ENCODE measurements at regions of chr3 and their contacts with region 1.

Region 1: DNA sequence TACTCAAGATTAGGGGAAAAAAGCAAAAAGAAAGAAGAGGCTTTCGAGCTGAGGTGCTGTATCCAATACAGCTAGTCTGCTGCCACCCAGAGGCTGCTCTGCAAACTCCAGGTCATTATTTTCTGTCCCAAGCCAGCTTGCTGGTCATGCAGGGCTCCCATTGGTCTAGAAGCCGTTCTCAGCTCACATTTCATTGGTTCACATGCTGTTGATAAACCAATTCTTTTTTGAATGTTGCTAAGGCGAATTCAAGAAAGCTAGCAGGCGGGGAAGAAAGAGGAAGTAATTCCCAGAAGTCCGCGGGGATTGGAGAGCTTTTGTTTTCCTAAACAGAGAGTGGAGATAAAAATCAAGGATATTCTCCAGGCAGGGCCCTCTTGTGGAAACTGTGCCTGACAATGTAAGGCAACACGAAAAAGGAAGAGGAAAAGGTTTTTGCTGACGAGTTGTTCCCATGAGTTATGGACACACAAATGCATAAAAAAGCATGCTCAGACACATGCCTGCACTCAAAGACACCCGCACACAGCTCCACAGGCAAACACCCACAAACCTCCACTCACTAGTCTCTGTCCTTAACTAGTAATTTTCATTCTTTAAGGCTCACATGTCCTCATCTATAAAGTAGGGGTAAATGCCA is 33.4 kb downstream of the FSTL1 start:
- DNase-seq: peak; percentile 94
- H3K4me3 ChIP-seq: no peak overlapping the region
- H3K27me3 ChIP-seq: no peaks in the 10 kb centered on the region
- CTCF ChIP-seq: peak; percentile 82

Region 2: DNA sequence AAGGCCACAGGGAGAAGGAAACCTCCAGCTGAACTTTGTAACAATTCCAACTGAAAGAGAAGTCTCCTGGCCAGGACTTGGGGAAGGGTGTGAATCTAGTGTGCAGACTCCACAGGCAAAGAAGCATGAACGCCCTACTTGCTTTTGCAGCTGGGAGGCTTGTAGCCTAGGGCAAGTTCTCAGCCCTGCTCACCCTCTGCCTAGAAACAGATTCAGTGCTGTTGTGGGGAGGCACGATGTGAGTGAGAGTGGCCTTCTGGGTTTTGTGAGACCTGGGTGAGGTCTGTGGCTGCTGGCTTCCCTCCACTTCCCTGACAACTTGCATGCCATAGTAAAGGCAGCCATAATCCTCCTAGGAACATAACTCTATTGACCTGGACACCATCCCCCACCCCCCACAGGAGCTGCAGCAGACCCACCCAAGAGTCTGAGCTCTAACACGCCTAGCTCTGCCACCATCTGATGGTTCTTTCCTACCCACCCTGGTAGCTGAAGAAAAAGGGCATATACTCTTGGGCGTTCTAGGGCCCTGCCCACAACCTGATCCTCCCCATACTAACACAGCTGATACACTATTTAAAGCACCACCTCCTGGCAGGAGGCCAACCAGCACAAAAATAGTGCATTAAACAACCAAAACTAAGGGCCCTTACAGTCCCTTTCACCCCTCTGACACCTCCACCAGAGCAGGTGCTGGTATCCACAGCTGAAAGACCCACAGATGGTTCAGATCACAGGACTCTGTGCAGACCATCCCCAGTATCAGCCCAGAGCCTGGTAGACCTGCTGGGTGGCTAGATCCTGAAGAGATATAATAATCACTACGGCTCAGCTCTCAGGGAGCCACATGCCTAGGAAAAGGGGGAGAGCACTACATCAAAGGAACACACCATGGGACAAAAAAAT is 1809.2 kb before region 1 on chr3:
- CTCF ChIA-PET with region 1: no interaction called
- POLR2A ChIA-PET with region 1: no interaction called
- DNase-seq: no peak
- H3K4me3 ChIP-seq: no peak overlapping the region
- H3K27me3 ChIP-seq: no peaks in the 10 kb centered on the region
- CTCF ChIP-seq: no peak

Region 3: GRCh38 chr3:120245386-120245785 is 172.0 kb before region 1 on chr3:
- CTCF ChIA-PET with region 1: interaction called, 14 read pairs
- POLR2A ChIA-PET with region 1: no interaction called
- DNase-seq: no peak
- H3K4me3 ChIP-seq: no peak overlapping the region
- H3K27me3 ChIP-seq: peaks cover 3% of the 10 kb centered on the region; the same call in 1 of the 2 replicates
- CTCF ChIP-seq: no peak

Region 4: DNA sequence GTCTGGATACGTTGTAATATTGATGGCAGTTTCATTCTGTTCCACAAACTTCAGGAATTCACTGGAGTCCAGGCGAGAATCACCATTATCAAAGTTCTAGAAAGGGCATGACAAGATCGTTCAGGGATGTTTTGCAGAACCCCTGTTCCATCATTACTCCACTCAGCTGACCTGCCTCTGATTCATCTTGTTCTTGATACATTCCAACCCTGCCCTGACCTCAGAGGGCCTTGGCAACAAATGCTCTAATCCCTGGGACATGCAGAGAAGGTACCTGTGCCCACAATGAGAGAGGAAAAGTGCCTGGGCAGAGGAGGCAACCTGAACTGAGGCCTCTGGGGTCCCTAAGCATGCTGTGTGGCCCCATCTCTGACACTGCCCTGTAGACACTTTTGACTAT is 12.5 kb before region 1 on chr3:
- CTCF ChIA-PET with region 1: interaction called, 16 read pairs
- POLR2A ChIA-PET with region 1: no interaction called
- DNase-seq: no peak
- H3K4me3 ChIP-seq: no peak overlapping the region
- H3K27me3 ChIP-seq: no peaks in the 10 kb centered on the region
- CTCF ChIP-seq: no peak

Region 5: DNA sequence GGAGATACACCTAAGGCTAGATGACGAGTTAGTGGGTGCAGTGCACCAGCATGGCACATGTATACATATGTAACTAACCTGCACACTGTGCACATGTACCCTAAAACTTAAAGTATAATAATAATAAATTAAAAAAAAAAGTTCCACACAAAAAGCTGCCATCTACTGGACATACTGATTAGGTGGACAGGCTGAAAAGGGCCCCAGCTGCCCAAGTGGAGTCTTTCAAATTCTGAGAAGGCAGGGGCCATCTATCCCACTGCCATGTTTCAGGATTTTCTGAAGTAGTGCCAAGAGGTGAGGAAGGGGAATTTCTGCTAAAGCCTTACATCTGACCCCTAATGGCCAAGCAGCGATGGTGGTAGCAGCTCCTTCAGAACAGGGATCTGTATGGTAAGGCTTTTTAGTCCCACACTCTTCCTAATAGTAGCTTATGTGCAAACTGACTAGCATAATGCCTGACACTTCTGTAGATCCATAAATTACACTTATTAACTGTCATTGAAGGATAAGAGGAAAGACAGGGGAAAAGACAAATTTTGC is 25.7 kb after region 1 on chr3:
- CTCF ChIA-PET with region 1: interaction called, 48 read pairs
- POLR2A ChIA-PET with region 1: no interaction called
- DNase-seq: no peak
- H3K4me3 ChIP-seq: no peak overlapping the region
- H3K27me3 ChIP-seq: no peaks in the 10 kb centered on the region
- CTCF ChIP-seq: peak; percentile 41

Region 6: DNA sequence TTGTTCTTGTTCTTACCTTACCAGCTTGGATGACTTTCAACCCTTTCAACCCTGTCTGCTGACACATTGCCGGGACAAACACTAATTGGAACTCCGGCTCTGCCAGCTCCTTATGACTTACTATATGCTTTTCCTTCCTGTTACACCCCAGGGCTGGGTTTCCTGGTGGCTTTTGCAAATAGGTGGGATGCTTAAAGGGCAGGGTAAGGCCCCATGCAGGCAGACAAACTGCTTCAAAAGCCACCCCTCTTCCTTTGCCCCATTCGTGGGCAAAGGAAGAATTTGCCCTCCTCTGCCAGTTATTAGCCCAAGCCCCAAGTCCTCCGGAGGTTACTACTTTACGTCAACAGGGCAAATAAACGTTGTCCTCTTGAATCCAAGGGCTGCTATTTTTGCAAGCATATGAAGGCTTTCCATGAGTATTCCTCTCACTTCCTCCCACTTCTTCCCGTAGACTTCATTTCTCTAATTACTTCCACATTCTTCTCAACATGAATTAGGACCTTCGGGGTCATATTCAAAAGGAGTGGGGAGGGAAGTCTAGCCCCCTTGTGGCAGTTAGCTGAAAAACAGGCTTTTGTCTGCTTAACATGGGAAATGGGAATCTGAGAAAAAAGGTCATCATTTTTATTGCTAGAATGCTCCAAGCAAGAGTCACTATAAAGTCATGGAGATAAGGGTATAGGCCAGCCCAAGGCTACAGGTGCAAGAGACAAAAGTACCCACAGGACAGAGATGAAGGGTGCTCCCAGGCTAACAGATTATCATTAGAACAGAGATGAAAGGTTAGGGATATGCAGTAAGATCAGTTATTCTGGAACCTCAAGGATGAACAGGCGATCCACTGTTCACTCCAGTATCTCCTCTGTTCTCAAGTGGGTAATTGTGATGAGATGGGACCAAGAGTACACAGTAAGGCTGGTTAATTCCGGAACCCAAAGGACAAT is 89.7 kb after region 1 on chr3:
- CTCF ChIA-PET with region 1: interaction called, 14 read pairs
- POLR2A ChIA-PET with region 1: no interaction called
- DNase-seq: no peak
- H3K4me3 ChIP-seq: no peak overlapping the region
- H3K27me3 ChIP-seq: no peaks in the 10 kb centered on the region
- CTCF ChIP-seq: peak; percentile 77

Region 7: DNA sequence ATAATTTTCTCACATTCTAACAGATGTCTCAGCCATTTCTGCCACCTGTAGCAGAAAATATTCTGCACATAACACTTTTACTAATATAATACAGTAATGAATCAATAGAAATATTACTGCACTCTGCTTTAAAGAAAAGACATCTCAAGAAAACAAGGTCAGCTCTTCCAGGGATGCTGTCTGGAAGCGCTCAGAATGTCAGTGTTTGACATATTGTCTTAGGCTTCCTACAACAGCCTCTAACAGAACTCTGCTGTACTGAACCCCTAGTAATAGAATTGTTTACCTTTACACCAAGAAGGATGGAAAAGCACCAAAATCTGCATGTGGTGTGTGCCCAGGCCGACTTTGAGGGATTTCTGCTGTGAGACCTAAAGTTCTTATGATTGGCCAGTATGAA is 95.3 kb after region 1 on chr3:
- CTCF ChIA-PET with region 1: interaction called, 11 read pairs
- POLR2A ChIA-PET with region 1: interaction called, 3 read pairs
- DNase-seq: no peak
- H3K4me3 ChIP-seq: no peak overlapping the region
- H3K27me3 ChIP-seq: peaks cover 3% of the 10 kb centered on the region; the same call in 1 of the 2 replicates
- CTCF ChIP-seq: no peak

Measured in BJ (cell line).